PC-9 (cell line): ENCODE measurements at regions of chr1 and their contacts with region 1.

Region 1: DNA sequence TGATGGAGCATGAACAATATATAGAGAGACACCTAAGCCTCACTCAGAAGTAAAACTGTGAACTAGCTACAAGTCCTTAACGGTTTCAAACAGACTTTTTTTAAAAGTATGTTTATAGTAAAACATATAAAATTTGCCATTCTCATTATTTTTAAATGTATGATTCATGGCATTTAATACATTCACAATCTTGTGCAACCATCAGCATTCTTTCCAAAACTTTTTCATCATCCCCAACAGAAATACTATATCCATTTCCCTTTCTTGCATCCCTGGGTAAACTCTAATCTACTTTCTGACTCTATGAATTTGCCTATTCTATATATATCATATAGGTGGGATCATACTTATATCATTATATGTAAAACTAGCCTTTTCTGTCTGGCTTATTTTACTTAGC is 25.5 kb downstream of the EVI5 start:
- DNase-seq: peak in 1 of 2 experiments; percentile 4
- H3K4me3 ChIP-seq: no peak overlapping the region
- H3K27ac ChIP-seq: no peak overlapping the region
- H3K4me1 ChIP-seq: no peaks in the 10 kb centered on the region; the same call in 1 of the 2 replicates
- H3K27me3 ChIP-seq: no peaks in the 10 kb centered on the region
- CTCF ChIP-seq: no peak

Region 2: GRCh38 chr1:92736395-92736794 is 23.0 kb before region 1 on chr1:
- CTCF ChIA-PET with region 1: no interaction called
- POLR2A ChIA-PET with region 1: no interaction called
- intact Hi-C with region 1: no loop called
- DNase-seq: peak in 1 of 2 experiments; percentile 31
- H3K4me3 ChIP-seq: no peak overlapping the region
- H3K27ac ChIP-seq: no peak overlapping the region
- H3K4me1 ChIP-seq: no peaks in the 10 kb centered on the region
- H3K27me3 ChIP-seq: no peaks in the 10 kb centered on the region
- CTCF ChIP-seq: peak; percentile 31; the same call in 1 of the 2 replicates

Region 3: DNA sequence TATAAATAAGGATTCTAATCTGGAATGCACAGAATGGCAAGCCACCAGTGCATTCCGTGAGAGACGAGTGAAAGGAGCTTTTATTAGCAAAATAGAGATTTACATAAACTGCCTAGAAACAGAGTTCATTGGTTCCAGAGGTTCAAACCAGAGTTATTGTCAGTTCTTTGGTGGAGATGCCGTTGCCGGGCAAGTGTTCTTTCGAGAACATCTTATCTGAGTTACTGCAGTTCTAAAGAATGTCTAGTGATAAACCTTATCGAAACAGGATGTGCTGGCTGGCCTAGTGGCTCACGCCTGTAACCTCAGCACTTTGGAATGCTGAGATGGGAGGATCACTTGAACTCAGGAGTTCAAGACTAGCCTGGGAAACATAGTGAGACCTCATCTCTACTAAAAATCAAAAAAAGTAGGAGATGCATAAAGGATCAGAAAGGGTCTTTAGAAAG is 45.4 kb after region 1 on chr1:
- CTCF ChIA-PET with region 1: no interaction called
- POLR2A ChIA-PET with region 1: interaction called, 12 read pairs
- intact Hi-C with region 1: no loop called
- DNase-seq: peak; percentile 74 to 94
- H3K4me3 ChIP-seq: no peak overlapping the region
- H3K27ac ChIP-seq: peak overlapping the region; percentile 33
- H3K4me1 ChIP-seq: peaks cover 18% of the 10 kb centered on the region
- H3K27me3 ChIP-seq: no peaks in the 10 kb centered on the region
- CTCF ChIP-seq: no peak